Ovary (tissue), 10 donors: ENCODE measurements at regions of chr1 and their contacts with region 1.

Region 1: DNA sequence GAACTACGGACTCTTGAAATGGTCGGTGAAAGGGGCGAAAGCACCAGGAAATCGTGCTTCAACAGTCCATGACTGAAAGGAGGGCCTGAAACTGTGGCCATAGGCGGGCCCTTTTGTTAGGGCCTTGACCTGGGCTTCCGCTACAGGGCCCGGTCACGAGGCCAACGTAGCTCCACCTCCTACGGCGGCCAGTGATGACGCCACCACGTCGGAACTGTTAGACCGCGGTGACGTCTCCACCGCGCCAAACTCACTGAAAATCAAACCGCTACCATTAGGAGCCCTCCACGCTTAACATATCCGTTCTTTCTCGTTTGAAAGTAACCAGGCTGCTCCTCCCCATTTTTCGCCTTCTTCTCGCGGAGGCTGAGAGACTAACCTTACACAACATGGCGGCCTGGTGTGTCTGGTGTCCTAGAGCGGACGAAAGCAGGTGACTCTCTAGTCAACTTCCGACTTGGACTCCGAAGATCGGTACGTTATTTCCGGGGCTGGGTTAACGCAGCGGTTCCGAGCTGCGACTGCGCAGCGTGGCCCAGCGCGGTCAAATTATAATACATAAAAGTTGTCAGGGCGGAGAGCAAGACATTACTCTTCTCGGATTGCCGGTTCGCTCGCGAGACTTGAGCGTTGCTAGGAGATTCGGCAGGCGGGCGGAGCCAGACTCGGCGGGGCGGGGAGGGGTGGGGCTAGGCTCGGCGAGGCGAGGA is 376 bp upstream of the CACYBP start:
- DNase-seq: peak; percentile 97 to 99 (median 98)
- H3K4me3 ChIP-seq: peak overlapping the region; percentile 97
- H3K27ac ChIP-seq: peak overlapping the region; percentile 88 to 99
- H3K4me1 ChIP-seq: peaks cover 8% of the 10 kb centered on the region
- H3K27me3 ChIP-seq: no peaks in the 10 kb centered on the region
- CTCF ChIP-seq: no peak
- EP300 ChIP-seq: peak; percentile 86
- POLR2A ChIP-seq: peak; percentile 92

Region 2: GRCh38 chr1:175023043-175023921 is 23.9 kb after region 1 on chr1 and contains the start of gene MRPS14:
- intact Hi-C with region 1: loop called in 1 of 4 experiments (anchors 1 kb)
- DNase-seq: peak; percentile 98 to 99 (median 98)
- H3K4me3 ChIP-seq: peak within 1 kb of the TSS; percentile 96
- H3K27ac ChIP-seq: peak within 1 kb of the TSS; percentile 73 to 76
- H3K4me1 ChIP-seq: peaks cover 3% of the 10 kb centered on the region
- H3K27me3 ChIP-seq: no peaks in the 10 kb centered on the region
- CTCF ChIP-seq: peak in 1 of 3 donors; percentile 10
- EP300 ChIP-seq: no peak
- POLR2A ChIP-seq: peak; percentile 71
- total RNA-seq, gene MRPS14: 21.1 to 30.9 (median 26.2) TPM